ENCODE measurements at regions of chr10 and their contacts with region 1.

Region 1: DNA sequence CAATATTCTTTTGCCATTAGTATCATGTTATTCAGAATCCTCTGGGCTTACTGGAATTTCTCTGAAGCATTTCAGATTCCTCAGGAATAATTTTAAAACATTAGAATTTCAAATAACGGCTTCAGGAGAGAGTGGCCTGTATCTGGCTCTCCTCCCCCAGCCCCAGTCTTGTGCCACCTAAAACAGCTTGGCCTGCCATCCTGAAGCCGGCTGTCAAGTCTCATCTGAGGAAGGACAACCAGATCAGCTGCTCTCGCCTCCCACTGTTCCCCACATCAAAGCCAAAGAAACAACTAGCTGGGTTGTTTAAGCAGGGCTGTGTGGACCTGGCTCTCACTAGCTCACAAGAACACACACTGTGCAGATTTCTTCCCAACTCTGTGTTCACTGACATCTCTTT is 178.2 kb downstream of the FGFR2 start:
- DNase-seq: no peak
- H3K4me3 ChIP-seq: no peak overlapping the region
- H3K27ac ChIP-seq: no peak overlapping the region
- H3K4me1 ChIP-seq: no peaks in the 10 kb centered on the region
- H3K27me3 ChIP-seq: 0 out of 2 replicates have a peak, but pooled peaks cover 19% of the 10 kb centered on the region
- CTCF ChIP-seq: no peak

Region 2: DNA sequence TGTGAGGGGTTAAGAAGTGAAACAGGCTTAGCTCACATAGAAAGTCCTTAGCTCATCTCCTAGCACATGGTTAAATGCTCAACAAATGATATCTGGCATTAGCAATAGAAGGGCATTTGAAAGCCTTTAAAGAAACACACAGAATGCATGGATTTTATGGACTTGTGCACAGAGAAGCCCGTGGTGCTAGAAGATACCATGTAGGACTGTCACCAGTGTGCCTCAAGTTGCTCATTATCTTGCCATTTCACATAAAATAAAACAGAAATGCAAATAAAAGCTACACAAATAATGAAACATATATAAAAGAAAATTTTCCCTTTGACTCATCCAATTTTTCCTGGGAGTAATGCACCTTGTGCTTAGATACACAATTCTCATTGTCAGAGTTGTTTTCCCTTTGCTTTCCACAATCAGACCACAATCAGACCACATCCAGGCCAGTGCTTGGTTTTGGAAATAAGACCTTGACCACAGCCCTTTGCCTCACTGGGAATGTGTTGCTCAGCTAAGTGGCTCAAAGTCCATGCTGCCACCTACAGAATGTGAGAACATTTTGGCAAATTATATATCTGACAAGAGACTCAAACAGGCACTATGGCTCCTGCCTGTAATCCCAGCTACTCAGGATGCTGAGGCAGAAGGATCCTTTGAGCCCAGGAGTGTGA is 578.4 kb before region 1 on chr10:
- CTCF ChIA-PET with region 1: no interaction called
- POLR2A ChIA-PET with region 1: interaction called, 13 read pairs
- intact Hi-C with region 1: no loop called
- DNase-seq: peak; percentile 10 to 69
- H3K4me3 ChIP-seq: no peak overlapping the region
- H3K27ac ChIP-seq: no peak overlapping the region
- H3K4me1 ChIP-seq: no peaks in the 10 kb centered on the region
- H3K27me3 ChIP-seq: peaks cover 29% of the 10 kb centered on the region
- CTCF ChIP-seq: no peak

Region 3: GRCh38 chr10:121244818-121245217 is 175.2 kb before region 1 on chr10:
- CTCF ChIA-PET with region 1: no interaction called
- POLR2A ChIA-PET with region 1: no interaction called
- intact Hi-C with region 1: no loop called
- DNase-seq: no peak
- H3K4me3 ChIP-seq: no peak overlapping the region
- H3K27ac ChIP-seq: no peak overlapping the region
- H3K4me1 ChIP-seq: no peaks in the 10 kb centered on the region
- H3K27me3 ChIP-seq: no peaks in the 10 kb centered on the region
- CTCF ChIP-seq: no peak